ENCODE measurements at regions of chr6 and their contacts with region 1.

Region 1: DNA sequence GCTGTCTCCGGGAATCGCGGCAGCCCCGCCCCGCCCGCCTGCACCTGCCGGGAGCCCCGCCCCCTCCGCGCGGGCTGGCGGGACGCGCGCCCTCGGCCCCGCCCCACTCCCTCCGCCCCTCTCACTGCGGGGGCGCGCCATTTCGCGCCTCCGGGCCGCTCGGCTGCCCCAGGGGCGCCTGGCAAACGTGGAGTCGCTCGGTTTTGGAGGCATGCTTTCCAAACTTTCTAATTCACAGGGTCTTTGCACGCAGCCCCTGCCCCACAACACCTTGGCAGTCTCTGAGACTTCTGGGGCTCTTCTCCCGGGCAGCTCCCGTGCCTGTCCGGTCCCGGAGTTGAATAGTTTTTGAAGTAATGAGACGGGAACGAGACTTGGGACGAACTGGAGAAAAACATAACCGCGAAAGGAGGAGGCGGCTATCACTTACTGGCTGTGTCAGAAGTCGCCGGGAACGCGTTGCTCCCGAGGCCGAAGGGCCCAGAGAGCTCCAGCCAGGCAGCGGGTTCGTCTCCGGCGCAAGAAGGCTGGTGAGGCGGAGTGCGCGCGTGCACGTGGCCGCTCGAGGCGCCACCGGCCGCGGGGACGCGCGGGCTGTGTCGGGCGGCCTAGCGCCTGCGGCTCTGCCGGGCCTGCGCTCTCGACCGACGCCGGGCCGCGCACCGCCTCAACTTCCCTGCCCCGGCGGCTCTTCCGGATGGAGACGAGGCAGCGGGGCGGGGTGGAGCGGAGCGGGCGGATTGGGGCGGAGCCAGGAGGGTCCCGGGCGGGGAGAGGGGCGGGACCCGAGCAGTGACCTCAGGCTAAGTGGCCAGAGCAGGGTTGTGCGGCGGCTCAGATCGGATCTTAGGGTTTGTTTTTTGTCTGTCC is at the start of gene MCM9:
- DNase-seq: peak; percentile 90
- ATAC-seq: peak; percentile 98
- H3K4me3 ChIP-seq: peak within 1 kb of the TSS; percentile 77 to 99 (median 89)
- H3K27ac ChIP-seq: peak within 1 kb of the TSS; percentile 92
- H3K4me1 ChIP-seq: peaks cover 31% of the 10 kb centered on the region
- H3K27me3 ChIP-seq: no peaks in the 10 kb centered on the region; a peak in 1 of 5 replicates
- CTCF ChIP-seq: no peak
- EP300 ChIP-seq: peak in 1 of 2 experiments; percentile 22; a peak in 1 of 4 replicates
- POLR2A ChIP-seq: peak; percentile 73 to 78
- RAD21 ChIP-seq: peak; percentile 41; the same call in 1 of the 2 replicates
- total RNA-seq, gene MCM9: 11.6 and 17.2 TPM in 2 replicates

Region 2: DNA sequence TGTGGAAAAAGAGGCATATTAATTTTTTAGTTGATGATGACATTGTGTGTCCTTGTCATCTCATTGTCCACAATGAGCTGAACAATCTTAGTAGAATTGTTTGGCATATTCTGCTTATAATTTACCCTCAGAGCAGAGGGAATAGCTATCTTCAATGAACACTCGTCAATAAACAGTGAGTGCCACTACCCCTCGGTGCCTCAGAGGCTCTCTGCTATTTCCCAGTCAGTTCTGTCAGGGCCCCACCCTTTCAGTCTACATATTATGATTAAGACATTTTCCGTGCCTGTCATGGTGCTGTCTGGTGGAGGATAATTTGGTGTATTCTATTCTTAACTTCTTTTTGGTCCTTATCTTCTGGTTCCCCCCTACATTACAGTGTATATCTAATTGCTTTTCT is 1228.2 kb before region 1 on chr6:
- CTCF ChIA-PET with region 1: no interaction called
- POLR2A ChIA-PET with region 1: no interaction called
- in situ Hi-C with region 1: no loop called
- intact Hi-C with region 1: no loop called
- DNase-seq: no peak
- ATAC-seq: no peak
- H3K4me3 ChIP-seq: no peak overlapping the region
- H3K27ac ChIP-seq: no peak overlapping the region
- H3K4me1 ChIP-seq: no peaks in the 10 kb centered on the region
- H3K27me3 ChIP-seq: no peaks in the 10 kb centered on the region
- CTCF ChIP-seq: no peak
- EP300 ChIP-seq: no peak
- POLR2A ChIP-seq: no peak
- RAD21 ChIP-seq: no peak

Region 3: DNA sequence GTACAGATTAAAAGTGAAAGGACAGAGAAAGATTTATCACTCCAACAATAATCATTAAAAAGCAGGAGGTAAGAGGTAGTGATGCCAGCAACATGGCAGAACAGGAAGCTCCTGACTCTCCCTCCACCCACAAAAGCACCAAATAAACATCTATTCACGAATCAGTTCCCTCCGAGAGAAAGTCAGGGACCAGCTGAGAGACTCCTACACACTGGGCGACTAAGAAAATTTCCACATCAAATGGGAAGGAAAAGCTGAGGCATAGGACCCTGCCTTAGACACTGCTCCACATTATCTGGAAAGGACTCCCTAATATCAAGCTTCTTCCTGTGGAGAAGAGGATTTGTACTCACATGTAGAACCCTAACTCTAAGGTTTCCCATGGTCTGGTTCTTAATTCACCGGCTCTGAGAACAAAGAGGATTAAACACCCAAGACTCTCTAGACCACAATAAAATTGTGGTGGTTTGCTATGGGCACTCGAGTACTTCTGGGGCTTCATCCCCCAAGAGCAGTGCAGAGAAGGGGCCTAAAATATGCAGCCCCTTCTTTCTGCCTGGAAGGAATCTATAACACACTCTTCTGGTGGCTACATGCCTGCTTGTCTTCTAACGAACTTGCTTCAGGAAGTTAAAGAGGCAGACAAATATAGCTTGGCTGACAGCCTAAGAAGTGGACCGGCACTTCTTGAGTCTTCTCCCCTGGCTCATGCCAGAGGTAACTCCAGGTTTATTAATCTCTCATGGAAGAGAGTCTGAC is 70.2 kb before region 1 on chr6:
- CTCF ChIA-PET with region 1: no interaction called
- POLR2A ChIA-PET with region 1: no interaction called
- in situ Hi-C with region 1: no loop called
- intact Hi-C with region 1: no loop called
- DNase-seq: no peak
- ATAC-seq: no peak
- H3K4me3 ChIP-seq: no peak overlapping the region
- H3K27ac ChIP-seq: no peak overlapping the region
- H3K4me1 ChIP-seq: peaks cover 1% of the 10 kb centered on the region; the same call in 1 of the 2 replicates
- H3K27me3 ChIP-seq: no peaks in the 10 kb centered on the region
- CTCF ChIP-seq: no peak
- EP300 ChIP-seq: no peak
- POLR2A ChIP-seq: no peak
- RAD21 ChIP-seq: no peak

Region 4: GRCh38 chr6:118923035-118923434 is 11.7 kb before region 1 on chr6:
- CTCF ChIA-PET with region 1: no interaction called
- POLR2A ChIA-PET with region 1: interaction called, 12 read pairs
- in situ Hi-C with region 1: no loop called
- intact Hi-C with region 1: no loop called
- DNase-seq: peak; percentile 20
- ATAC-seq: peak; percentile 89
- H3K4me3 ChIP-seq: no peak overlapping the region; a peak in 1 of 6 replicates
- H3K27ac ChIP-seq: peak overlapping the region; percentile 14
- H3K4me1 ChIP-seq: peaks cover 16% of the 10 kb centered on the region
- H3K27me3 ChIP-seq: no peaks in the 10 kb centered on the region
- CTCF ChIP-seq: no peak
- EP300 ChIP-seq: no peak
- POLR2A ChIP-seq: no peak
- RAD21 ChIP-seq: no peak

Region 5: DNA sequence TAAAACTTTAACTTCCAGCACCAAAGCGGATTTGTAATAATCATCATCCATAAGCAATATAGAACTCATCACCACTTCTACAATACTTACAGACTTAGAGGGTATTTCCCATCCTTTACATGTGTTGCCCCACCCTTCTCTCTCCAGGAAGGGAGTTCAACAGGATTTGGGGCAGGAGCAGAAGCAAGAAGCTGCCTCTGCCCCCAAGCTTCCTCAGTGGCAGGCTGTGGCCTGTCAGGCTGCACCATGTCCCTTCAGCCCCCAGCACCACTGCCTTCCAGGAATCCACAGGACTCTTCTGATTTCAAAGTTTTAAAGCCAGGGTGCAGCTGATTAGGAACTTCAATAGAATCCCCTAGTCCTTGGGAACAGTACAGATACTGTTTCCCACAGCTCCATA is 37.0 kb after region 1 on chr6:
- CTCF ChIA-PET with region 1: no interaction called
- POLR2A ChIA-PET with region 1: no interaction called
- in situ Hi-C with region 1: no loop called
- intact Hi-C with region 1: no loop called
- DNase-seq: no peak
- ATAC-seq: no peak
- H3K4me3 ChIP-seq: no peak overlapping the region
- H3K27ac ChIP-seq: no peak overlapping the region
- H3K4me1 ChIP-seq: no peaks in the 10 kb centered on the region
- H3K27me3 ChIP-seq: no peaks in the 10 kb centered on the region
- CTCF ChIP-seq: no peak
- EP300 ChIP-seq: no peak
- POLR2A ChIP-seq: no peak
- RAD21 ChIP-seq: no peak

Region 6: GRCh38 chr6:120005292-120005976 is 1070.7 kb after region 1 on chr6:
- CTCF ChIA-PET with region 1: no interaction called
- POLR2A ChIA-PET with region 1: no interaction called
- in situ Hi-C with region 1: no loop called
- intact Hi-C with region 1: loop called (anchors 10 kb)
- DNase-seq: peak; percentile 92
- ATAC-seq: peak; percentile 98
- H3K4me3 ChIP-seq: peak overlapping the region; percentile 70 to 98 (median 74)
- H3K27ac ChIP-seq: peak overlapping the region; percentile 39
- H3K4me1 ChIP-seq: peaks cover 17% of the 10 kb centered on the region
- H3K27me3 ChIP-seq: no peaks in the 10 kb centered on the region; a peak in 1 of 5 replicates
- CTCF ChIP-seq: no peak
- EP300 ChIP-seq: no peak
- POLR2A ChIP-seq: peak; percentile 82 to 96
- RAD21 ChIP-seq: no peak